Astrocyte of the cerebellum (primary cell): ENCODE measurements at regions of chrX and their contacts with region 1.

Region 1: DNA sequence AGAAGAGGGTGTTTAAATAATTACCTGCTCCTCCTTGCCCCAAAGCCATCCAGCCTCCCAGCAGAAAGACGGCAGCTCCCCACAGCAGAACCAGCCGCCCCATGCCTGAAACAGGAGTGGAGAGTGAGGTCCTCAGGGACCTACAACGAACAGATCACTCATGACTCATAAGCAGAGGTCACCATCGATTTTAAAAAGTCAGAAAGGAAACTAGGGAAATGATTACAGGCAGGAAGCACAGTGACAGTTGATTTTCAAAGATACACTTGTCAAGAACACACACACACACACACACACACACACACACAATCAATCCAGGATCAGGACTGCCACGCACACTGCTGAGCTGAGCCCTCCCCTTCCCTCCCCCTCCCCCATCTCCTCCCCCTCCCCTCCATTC is at the start of gene CRLF2:
- DNase-seq: no peak
- H3K4me3 ChIP-seq: no peak within 1 kb of the TSS
- CTCF ChIP-seq: no peak

Region 2: DNA sequence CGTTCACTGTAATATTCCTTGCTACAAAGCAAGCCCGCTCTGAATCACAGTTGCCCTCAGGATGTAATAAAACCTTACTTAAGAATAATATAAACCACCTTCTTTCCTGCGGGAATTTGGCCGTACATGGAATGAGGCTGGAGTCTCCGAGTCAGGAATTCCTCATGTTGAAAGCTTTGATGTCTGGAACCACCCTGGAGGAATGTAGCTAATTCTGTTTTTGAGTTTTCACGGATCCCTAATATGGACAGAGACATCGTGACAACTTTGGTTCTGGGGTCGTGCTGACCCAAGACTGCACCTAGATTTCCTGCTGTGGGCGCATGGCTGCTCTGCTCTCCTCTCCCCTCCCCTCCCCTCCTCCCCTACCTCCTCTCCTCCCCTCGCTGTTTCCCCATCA is 58.5 kb before region 1 on chrX:
- in situ Hi-C with region 1: loop called (anchors 10 kb)
- DNase-seq: no peak
- H3K4me3 ChIP-seq: no peak overlapping the region
- CTCF ChIP-seq: no peak